Heart left ventricle (tissue), 16 donors: ENCODE measurements at regions of chr18 and their contacts with region 1.

Region 1: DNA sequence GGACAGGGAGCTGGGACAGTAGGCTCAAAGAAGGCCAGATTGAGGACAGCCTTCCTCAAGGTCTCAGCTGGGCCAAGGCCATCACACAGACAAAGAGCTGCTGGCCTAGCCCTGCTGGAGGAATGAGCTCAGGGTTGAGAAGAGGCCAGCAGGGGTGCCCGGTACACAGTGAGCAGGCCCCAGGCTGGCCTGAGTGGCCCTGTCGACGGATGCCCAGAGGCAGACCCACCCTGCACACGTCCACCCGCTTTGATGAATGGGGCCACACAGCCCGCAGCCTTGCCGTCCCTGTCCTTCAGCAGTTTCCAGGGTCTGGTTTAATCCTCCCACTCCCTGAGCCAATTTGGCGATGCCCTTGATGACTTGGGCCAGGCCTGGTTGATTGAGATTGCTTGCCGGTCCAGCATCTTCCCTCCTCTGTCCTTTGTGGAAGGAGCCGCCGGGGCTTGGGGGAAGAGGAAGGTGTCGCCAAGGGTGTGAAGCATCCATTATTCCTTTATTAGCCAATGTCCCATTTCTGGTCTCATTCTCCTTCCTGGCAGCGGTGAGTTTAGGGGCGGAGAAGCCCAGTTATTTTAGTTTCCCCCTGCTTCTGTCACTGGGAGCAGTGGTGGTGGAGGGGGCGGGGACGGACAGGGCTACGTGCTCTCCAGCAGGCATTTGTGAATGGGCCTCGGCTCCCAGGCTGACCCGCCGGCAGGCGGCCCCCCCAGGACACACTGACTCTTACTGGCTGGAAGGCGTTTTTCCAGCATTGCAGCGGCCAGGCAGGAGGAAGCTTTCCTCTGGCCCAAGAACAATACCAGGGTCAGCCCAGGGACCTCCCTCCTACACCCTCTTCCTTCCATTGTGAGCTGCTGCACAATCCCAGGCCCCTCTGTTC is 141.7 kb downstream of the CTIF start:
- DNase-seq: peak; percentile 88 to 92 (median 91)
- ATAC-seq: peak; percentile 89 to 95 (median 90)
- H3K4me3 ChIP-seq: no peak overlapping the region
- H3K27ac ChIP-seq: peak overlapping the region; percentile 56 to 94 (median 86)
- H3K4me1 ChIP-seq: peaks cover 8 to 75% (median 58%) of the 10 kb centered on the region in 12 donors
- H3K27me3 ChIP-seq: no peaks in the 10 kb centered on the region
- CTCF ChIP-seq: peak in 8 of 12 donors; percentile 17 to 56 (median 34)
- POLR2A ChIP-seq: no peak

Region 2: DNA sequence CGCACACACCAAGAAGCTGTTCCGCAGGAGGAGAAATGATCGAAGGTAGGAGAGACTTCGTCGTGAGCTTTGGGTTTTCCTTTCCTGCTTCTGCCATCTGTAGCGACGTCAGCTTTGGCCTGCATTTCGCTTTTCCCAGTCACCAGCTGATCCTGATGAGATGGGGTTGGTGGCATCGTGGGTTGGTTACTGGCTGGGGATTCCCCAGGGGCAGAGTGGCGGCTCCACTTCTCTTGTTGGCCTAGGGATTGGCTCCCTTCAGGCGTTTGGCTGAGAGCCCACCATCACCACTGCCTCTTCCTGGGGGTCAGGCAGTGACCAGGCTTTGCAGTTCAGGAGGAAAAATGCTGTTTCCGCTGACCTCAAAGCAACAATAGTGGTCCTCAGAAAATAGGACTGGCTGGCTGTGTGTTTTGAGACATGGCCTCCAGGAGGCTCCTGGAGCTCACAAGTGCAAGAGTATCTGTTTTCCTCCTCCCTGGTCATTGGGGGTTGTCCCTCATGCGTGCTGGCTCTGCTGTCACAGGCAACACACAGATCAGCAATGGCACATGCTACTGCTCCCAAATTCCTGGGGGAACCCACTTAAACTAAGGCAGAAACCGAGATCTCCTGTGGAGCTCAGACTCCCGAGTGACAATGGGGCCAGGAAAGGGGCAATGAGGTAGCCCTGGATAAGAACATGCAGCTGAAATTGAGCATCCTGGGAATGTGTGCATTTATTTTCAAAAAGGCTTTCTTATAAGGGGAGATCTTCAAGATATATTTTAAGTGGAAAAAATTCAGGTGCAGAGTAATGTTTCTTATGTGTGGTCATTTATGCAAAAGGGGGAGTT is 31.3 kb after region 1 on chr18:
- intact Hi-C with region 1: loop called in 2 of 10 experiments (anchors 1 kb)
- DNase-seq: peak; percentile 44 to 67 (median 59)
- ATAC-seq: peak in 3 of 4 donors; percentile 53 to 61 (median 60)
- H3K4me3 ChIP-seq: no peak overlapping the region
- H3K27ac ChIP-seq: peak overlapping the region in 7 of 12 donors; percentile 16 to 93 (median 64)
- H3K4me1 ChIP-seq: peaks cover 2 to 86% (median 49%) of the 10 kb centered on the region in 12 donors
- H3K27me3 ChIP-seq: no peaks in the 10 kb centered on the region
- CTCF ChIP-seq: peak; percentile 30 to 75 (median 60)
- POLR2A ChIP-seq: no peak

Region 3: DNA sequence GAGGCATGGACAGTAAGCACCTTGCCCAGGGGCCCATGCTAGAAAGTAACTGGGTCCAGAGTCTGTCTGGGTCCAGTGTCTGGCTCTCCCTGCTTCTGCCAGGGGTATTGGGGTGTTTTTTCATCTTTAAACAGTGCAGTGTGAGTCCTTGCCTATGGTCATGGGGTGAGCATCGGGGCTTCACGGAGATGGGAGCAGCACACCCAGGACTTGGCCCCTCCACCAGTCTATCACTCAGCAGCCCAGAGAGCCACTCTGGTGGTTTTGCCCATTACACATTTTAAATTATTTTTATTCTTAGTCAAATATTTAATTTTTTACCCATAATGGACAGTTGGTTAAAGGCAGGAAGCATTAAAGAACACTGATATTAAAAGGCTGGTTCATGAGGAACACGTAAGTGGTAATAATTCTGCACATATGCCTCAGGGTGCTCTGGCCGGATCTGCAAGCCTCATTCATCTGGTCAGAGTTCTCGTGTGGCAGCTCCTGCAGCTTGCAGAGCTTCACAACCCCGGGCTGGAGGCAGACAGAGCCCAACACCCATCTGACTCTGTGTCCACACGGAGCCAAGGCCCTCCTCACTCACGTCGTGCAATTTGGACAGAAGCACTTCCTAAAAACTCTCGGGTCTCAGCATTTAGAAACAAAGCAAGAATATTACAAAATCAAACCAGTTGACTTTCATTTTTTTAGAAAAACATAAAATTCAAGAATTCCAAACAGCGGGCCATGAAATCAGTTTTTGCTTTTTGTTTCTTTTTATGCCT is 62.3 kb after region 1 on chr18:
- intact Hi-C with region 1: loop called in 3 of 10 experiments (anchors 5 to 10 kb)
- DNase-seq: peak in 4 of 5 donors; percentile 58 to 79 (median 62)
- ATAC-seq: peak; percentile 47 to 73 (median 63)
- H3K4me3 ChIP-seq: no peak overlapping the region
- H3K27ac ChIP-seq: peak overlapping the region in 7 of 12 donors; percentile 34 to 72 (median 49)
- H3K4me1 ChIP-seq: peaks cover 0 to 53% (median 38%) of the 10 kb centered on the region in 12 donors
- H3K27me3 ChIP-seq: no peaks in the 10 kb centered on the region
- CTCF ChIP-seq: no peak
- POLR2A ChIP-seq: no peak

Region 4: DNA sequence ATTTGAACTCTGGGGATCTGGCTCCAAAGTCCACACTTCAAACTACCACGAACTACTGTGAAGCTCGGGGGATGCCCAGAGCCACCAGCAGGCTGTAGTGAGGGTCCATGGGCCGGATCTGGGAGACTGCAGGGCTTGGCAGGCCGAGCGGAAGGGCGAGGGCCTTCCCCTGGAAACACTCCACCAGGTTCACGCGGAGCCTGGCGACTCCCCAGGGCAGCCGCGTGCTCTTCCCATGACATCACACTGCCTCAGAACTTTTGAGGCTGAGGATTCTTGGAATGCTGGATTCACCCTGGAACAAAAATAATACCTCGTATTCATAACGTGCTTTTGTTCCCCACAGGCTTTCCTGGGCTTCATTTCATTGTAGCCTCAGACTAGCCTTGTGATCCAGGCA is 69.2 kb after region 1 on chr18:
- intact Hi-C with region 1: loop called in 3 of 10 experiments (anchors 5 to 10 kb)
- DNase-seq: peak; percentile 83 to 85 (median 83)
- ATAC-seq: peak; percentile 80 to 96 (median 88)
- H3K4me3 ChIP-seq: no peak overlapping the region
- H3K27ac ChIP-seq: peak overlapping the region; percentile 36 to 94 (median 72)
- H3K4me1 ChIP-seq: peaks cover 3 to 58% (median 31%) of the 10 kb centered on the region in 12 donors
- H3K27me3 ChIP-seq: no peaks in the 10 kb centered on the region
- CTCF ChIP-seq: peak; percentile 6 to 61 (median 42)
- POLR2A ChIP-seq: no peak

Region 5: GRCh38 chr18:48842259-48843061 is 161.9 kb after region 1 on chr18:
- intact Hi-C with region 1: loop called in 4 of 10 experiments (anchors 2 to 5 kb)
- DNase-seq: peak in 4 of 5 donors; percentile 50 to 66 (median 59)
- ATAC-seq: peak; percentile 43 to 80 (median 62)
- H3K4me3 ChIP-seq: no peak overlapping the region
- H3K27ac ChIP-seq: peak overlapping the region; percentile 49 to 98 (median 84)
- H3K4me1 ChIP-seq: peaks cover 6 to 73% (median 53%) of the 10 kb centered on the region in 12 donors
- H3K27me3 ChIP-seq: no peaks in the 10 kb centered on the region
- CTCF ChIP-seq: no peak
- POLR2A ChIP-seq: no peak

Region 6: GRCh38 chr18:48934723-48935432 is 254.3 kb after region 1 on chr18:
- intact Hi-C with region 1: loop called in 2 of 10 experiments (anchors 5 to 10 kb)
- DNase-seq: peak; percentile 84 to 91 (median 86)
- ATAC-seq: peak; percentile 75 to 85 (median 80)
- H3K4me3 ChIP-seq: peak overlapping the region in 10 of 12 donors; percentile 11 to 48 (median 34)
- H3K27ac ChIP-seq: peak overlapping the region; percentile 17 to 96 (median 86)
- H3K4me1 ChIP-seq: peaks cover 34 to 98% (median 93%) of the 10 kb centered on the region in 12 donors
- H3K27me3 ChIP-seq: no peaks in the 10 kb centered on the region
- CTCF ChIP-seq: no peak
- POLR2A ChIP-seq: no peak

Region 7: DNA sequence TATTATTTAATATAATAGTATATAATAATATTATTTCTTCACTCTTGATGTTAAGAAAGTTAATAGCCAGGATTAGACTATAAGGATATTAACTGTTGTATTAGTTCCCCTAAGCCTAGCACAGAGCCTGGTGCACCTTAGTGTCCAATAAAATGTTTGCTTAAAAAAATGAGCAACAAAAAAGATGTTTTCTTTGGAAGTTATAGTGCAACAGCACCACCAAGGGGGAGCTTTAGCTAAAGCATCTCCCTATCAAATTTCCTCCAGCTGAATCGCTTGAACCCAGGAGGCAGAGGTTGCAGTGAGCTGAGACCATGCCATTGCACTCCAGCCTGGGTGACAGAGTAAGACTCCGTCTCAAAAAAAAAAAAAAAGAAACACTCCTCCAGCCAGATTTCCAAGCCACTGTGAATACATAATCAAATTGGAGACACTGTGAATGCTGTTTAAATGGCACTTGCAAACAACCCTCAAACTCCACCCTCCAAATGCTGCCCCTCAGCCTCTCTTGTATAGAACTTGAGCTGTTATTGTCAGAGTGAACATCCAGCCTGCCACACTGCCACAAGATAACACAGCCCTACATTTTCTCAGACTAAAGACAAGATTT is 558.0 kb after region 1 on chr18:
- intact Hi-C with region 1: loop called in 8 of 10 experiments (anchors 2 to 10 kb)
- DNase-seq: no peak
- ATAC-seq: no peak
- H3K4me3 ChIP-seq: no peak overlapping the region
- H3K27ac ChIP-seq: no peak overlapping the region
- H3K4me1 ChIP-seq: no peaks in the 10 kb centered on the region
- H3K27me3 ChIP-seq: no peaks in the 10 kb centered on the region
- CTCF ChIP-seq: peak in 11 of 12 donors; percentile 19 to 54 (median 40)
- POLR2A ChIP-seq: no peak